GM13977 (cell line): ENCODE measurements at regions of chr11 and their contacts with region 1.

Region 1: DNA sequence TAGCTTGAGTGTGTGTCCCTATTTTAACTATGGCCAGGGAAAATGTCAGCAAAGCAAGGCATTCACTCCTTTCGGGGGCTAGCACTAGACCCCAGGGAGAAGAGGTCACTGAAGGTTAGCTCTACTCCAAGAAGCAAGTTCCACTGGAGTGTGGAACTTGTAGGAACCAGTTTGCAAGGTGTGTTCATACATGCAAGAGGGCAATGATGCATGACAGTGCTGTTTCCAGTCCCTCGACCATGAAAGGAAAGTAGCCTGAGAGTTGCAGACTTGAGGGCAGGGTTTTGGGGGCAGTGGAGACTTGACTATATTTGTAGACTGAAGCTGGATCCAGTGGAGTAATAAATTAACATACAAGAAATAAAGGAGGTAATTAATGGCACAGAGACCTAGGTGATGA is 21.6 kb upstream of the SLC36A4 start:
- DNase-seq: no peak
- CTCF ChIP-seq: no peak

Region 2: GRCh38 chr11:92941676-92942571 is 277.5 kb before region 1 on chr11:
- in situ Hi-C with region 1: loop called (anchors 25 kb)
- DNase-seq: peak; percentile 59
- CTCF ChIP-seq: peak; percentile 75

Region 3: DNA sequence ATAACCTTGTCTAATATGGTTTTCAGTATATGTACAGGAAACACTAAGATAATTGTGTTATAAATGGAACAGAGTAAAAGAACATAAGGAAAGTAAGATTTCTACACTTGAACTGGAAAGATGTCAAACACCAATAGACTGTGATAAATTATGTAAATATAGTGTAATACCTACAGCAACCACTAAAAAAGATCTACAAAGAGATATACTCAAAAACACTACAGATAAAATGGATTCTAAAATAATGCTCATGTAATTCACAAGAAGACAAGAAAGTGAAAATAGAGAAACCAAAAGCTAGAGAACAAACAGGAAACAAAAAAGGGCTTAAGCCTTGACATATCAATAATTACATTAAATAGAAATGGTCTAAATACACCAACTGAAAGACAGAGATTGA is 142.0 kb after region 1 on chr11:
- in situ Hi-C with region 1: no loop called
- DNase-seq: no peak
- CTCF ChIP-seq: no peak